ENCODE measurements at regions of chr13 and their contacts with region 1.

Region 1: DNA sequence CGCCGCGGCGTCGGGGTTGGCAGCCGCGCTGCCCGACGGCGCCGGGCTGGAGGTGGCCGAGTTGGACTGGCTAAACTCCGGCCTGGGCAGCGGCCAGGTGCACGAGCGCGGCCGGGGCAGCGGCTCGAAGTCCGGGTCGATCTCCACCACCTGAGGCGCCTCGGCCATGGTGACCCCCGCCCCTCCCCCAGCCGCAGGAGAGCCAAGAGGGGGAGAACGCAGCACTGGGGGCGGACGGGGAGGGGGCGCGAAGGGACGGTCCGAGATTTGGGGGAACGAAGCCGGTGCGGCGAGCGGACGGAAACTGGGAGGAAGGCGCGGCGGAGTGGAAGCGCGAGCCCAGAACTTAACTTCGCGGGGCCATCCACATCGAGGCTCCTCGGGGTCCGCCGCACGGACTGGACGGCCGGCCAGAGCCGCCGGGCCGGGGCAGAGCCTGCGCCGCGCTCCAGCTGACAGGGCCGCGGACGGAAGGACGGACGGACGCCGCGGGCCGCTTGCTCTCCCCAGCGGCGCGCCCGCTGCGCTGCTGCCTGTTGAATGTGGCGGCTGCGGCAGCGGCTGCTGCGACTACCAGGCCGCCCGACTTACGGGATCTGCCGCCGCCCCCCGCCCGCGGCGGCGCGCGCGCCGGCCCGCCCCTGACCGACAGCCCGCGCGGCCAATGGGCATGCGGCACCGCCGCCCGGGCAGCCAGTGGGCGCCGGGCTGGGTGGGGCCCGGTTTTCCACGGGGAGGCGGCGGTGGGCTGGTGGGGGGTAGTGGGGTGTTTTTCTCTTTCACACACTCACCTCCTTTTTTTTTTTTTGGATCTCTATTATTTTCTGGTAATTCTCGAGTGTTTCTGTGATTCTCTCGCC is at the start of gene FOXO1:
- DNase-seq: no peak
- ATAC-seq: peak; percentile 68
- H3K4me3 ChIP-seq: peak within 1 kb of the TSS; percentile 92
- H3K27ac ChIP-seq: peak within 1 kb of the TSS; percentile 89
- H3K4me1 ChIP-seq: peaks cover 9% of the 10 kb centered on the region
- H3K27me3 ChIP-seq: no peaks in the 10 kb centered on the region
- CTCF ChIP-seq: peak in 1 of 3 experiments; percentile 14; a peak in 1 of 6 replicates
- EP300 ChIP-seq: no peak
- POLR2A ChIP-seq: peak; percentile 92
- RAD21 ChIP-seq: no peak
- polyA plus RNA-seq, gene FOXO1: 0.64 to 0.72 TPM

Region 2: GRCh38 chr13:40422588-40423235 is 243.6 kb before region 1 on chr13:
- CTCF ChIA-PET with region 1: no interaction called
- POLR2A ChIA-PET with region 1: no interaction called
- RAD21 ChIA-PET with region 1: no interaction called
- SMC1A ChIA-PET with region 1: no interaction called
- in situ Hi-C with region 1: no loop called
- intact Hi-C with region 1: loop called (anchors 5 kb)
- DNase-seq: no peak
- ATAC-seq: peak; percentile 12; the same call in 1 of the 3 replicates
- H3K4me3 ChIP-seq: no peak overlapping the region
- H3K27ac ChIP-seq: no peak overlapping the region
- H3K4me1 ChIP-seq: peaks cover 17% of the 10 kb centered on the region
- H3K27me3 ChIP-seq: no peaks in the 10 kb centered on the region
- CTCF ChIP-seq: no peak
- EP300 ChIP-seq: no peak
- POLR2A ChIP-seq: no peak
- RAD21 ChIP-seq: no peak

Region 3: GRCh38 chr13:40517486-40518480 is 148.5 kb before region 1 on chr13:
- CTCF ChIA-PET with region 1: interaction called, 4 read pairs
- POLR2A ChIA-PET with region 1: no interaction called
- RAD21 ChIA-PET with region 1: interaction called, 5 read pairs
- SMC1A ChIA-PET with region 1: interaction called, 6 read pairs
- in situ Hi-C with region 1: loop called (anchors 5 kb)
- intact Hi-C with region 1: loop called (anchors 1 kb)
- DNase-seq: peak; percentile 82
- ATAC-seq: peak; percentile 85
- H3K4me3 ChIP-seq: peak overlapping the region; percentile 33; the same call in 1 of the 2 replicates
- H3K27ac ChIP-seq: peak overlapping the region; percentile 66
- H3K4me1 ChIP-seq: peaks cover 30% of the 10 kb centered on the region
- H3K27me3 ChIP-seq: no peaks in the 10 kb centered on the region
- CTCF ChIP-seq: no peak
- EP300 ChIP-seq: peak; percentile 49 to 82; a peak in 2 of 4 replicates
- POLR2A ChIP-seq: no peak
- RAD21 ChIP-seq: no peak

Region 4: GRCh38 chr13:40629678-40630384 is 36.4 kb before region 1 on chr13:
- CTCF ChIA-PET with region 1: interaction called, 4 read pairs
- POLR2A ChIA-PET with region 1: interaction called, 3 read pairs
- RAD21 ChIA-PET with region 1: no interaction called
- SMC1A ChIA-PET with region 1: interaction called, 3 read pairs
- in situ Hi-C with region 1: no loop called
- intact Hi-C with region 1: loop called (anchors 2 kb)
- DNase-seq: peak; percentile 64
- ATAC-seq: peak; percentile 88
- H3K4me3 ChIP-seq: peak overlapping the region; percentile 25; the same call in 1 of the 2 replicates
- H3K27ac ChIP-seq: peak overlapping the region; percentile 49
- H3K4me1 ChIP-seq: peaks cover 32% of the 10 kb centered on the region
- H3K27me3 ChIP-seq: no peaks in the 10 kb centered on the region
- CTCF ChIP-seq: no peak
- EP300 ChIP-seq: no peak; a peak in 1 of 4 replicates
- POLR2A ChIP-seq: no peak
- RAD21 ChIP-seq: no peak

Region 5: DNA sequence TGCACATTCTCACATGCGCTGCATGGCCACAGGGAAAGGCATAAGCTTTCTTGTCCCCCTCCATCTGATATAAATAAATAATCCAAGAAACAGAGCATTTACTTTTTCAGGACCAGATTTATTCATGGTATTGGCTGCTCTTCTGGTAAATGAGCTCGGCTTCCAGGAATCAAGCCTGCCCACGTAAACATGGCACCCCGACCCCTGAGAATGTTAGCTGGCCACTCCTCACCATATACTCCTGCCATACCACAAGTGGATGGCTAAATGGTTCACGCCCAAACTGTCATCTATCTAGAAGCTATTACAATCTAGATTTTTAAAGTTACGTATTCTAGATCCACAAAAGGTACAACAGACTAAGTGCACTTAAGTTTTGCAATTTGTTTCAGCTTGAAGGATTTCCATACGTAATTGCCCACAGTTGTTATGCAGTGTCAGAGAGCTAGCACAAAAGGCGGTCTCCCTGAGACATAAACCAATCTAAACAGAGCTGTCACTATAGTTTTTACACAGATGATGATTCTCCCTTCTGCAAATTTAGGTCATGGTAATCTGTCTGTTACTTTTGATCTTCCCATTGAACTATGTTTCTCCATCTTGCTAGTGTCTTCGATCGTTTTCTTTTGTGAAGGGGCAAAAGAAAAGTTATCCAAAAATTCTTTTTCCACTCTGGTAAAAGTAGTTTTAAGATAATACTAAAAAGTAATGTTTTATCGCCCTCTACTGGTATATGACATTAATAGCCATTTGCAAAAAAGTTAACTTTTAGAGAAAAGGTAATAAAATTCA is 16.4 kb after region 1 on chr13:
- CTCF ChIA-PET with region 1: interaction called, 63 read pairs
- POLR2A ChIA-PET with region 1: no interaction called
- RAD21 ChIA-PET with region 1: interaction called, 20 read pairs
- SMC1A ChIA-PET with region 1: interaction called, 39 read pairs
- in situ Hi-C with region 1: no loop called
- intact Hi-C with region 1: no loop called
- DNase-seq: no peak
- ATAC-seq: peak; percentile 65
- H3K4me3 ChIP-seq: no peak overlapping the region
- H3K27ac ChIP-seq: no peak overlapping the region
- H3K4me1 ChIP-seq: no peaks in the 10 kb centered on the region
- H3K27me3 ChIP-seq: peaks cover 0 to 3% of the 10 kb centered on the region in 2 experiments; a peak in 1 of 4 replicates
- CTCF ChIP-seq: peak in 1 of 3 experiments; percentile 48; a peak in 4 of 6 replicates
- EP300 ChIP-seq: no peak; a peak in 1 of 4 replicates
- POLR2A ChIP-seq: no peak
- RAD21 ChIP-seq: peak; percentile 55

Measured in GM12878 (cell line).